ENCODE measurements at regions of chr17 and their contacts with region 1.

Region 1: DNA sequence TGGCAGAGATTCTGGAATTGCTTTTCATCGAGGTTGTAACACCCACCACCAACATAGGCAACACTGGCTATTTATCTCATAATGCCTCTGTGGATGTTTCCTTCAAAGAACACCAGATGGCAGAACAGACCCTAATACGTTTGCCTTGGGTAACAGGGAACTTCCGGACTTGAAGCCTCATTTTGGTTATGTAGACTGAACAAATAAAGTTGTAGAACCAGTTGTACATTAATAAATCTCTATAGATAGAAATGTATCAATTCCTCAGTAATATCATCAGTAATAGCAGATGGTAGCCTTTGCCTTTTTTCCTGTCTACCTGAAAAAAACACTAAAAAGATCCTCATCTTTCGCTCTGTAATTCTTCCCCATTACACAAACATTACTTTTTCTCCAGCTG is 25.9 kb upstream of the APOH start:
- DNase-seq: peak; percentile 74
- H3K4me3 ChIP-seq: no peak overlapping the region
- H3K27ac ChIP-seq: no peak overlapping the region
- H3K4me1 ChIP-seq: peaks cover 2% of the 10 kb centered on the region
- H3K27me3 ChIP-seq: no peaks in the 10 kb centered on the region
- CTCF ChIP-seq: peak; percentile 50 to 58
- POLR2A ChIP-seq: no peak

Region 2: DNA sequence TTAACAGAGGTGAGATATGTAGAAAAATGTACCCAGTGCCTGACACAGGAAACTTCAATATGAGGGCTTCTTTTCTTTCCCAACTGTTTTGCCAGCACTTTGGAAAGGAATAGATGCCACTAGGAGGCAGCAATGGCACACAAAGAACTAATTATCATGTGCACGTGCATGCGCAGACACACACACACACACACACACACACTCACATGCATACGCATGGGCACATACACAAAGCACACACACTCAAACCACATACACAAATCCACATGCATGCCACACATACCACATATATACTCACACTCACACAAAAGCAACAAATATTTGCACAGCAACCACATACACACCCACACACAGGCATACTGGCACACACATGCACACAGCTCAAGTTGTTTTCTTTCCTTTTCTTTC is 54.4 kb before region 1 on chr17:
- CTCF ChIA-PET with region 1: interaction called, 3 read pairs
- POLR2A ChIA-PET with region 1: no interaction called
- dilution Hi-C with region 1: no loop called
- intact Hi-C with region 1: loop called (anchors 1 kb)
- DNase-seq: peak; percentile 79
- H3K4me3 ChIP-seq: no peak overlapping the region
- H3K27ac ChIP-seq: no peak overlapping the region
- H3K4me1 ChIP-seq: no peaks in the 10 kb centered on the region
- H3K27me3 ChIP-seq: no peaks in the 10 kb centered on the region
- CTCF ChIP-seq: peak; percentile 67 to 70
- POLR2A ChIP-seq: no peak

Region 3: GRCh38 chr17:66275651-66276050 is 20.5 kb after region 1 on chr17:
- CTCF ChIA-PET with region 1: interaction called, 6 read pairs
- POLR2A ChIA-PET with region 1: no interaction called
- dilution Hi-C with region 1: no loop called
- intact Hi-C with region 1: loop called (anchors 1 kb)
- DNase-seq: peak; percentile 90
- H3K4me3 ChIP-seq: no peak overlapping the region
- H3K27ac ChIP-seq: peak overlapping the region; percentile 87
- H3K4me1 ChIP-seq: peaks cover 30% of the 10 kb centered on the region
- H3K27me3 ChIP-seq: no peaks in the 10 kb centered on the region
- CTCF ChIP-seq: no peak
- POLR2A ChIP-seq: no peak

Region 4: DNA sequence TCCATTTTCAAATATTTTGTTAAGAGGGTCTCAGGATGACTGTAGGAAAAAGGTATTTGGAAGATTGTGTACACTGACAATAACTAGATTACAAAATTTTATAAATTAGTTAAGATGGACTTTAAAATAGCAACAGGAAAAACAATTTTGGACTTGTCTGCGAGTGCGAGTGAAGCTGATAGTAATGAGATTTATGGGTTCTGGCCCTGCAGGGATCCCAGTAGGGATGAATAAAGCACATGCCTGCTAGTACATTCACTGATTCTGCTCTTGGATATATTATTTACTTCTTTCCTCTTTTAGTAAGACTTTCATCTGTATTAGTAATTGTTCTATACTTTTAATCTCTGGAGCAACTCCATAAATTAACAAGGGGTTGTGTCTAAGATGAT is 75.5 kb after region 1 on chr17:
- CTCF ChIA-PET with region 1: no interaction called
- POLR2A ChIA-PET with region 1: no interaction called
- dilution Hi-C with region 1: no loop called
- intact Hi-C with region 1: no loop called
- DNase-seq: no peak
- H3K4me3 ChIP-seq: no peak overlapping the region
- H3K27ac ChIP-seq: no peak overlapping the region
- H3K4me1 ChIP-seq: no peaks in the 10 kb centered on the region
- H3K27me3 ChIP-seq: no peaks in the 10 kb centered on the region
- CTCF ChIP-seq: no peak
- POLR2A ChIP-seq: no peak

Region 5: GRCh38 chr17:66426397-66427033 is 171.4 kb after region 1 on chr17:
- CTCF ChIA-PET with region 1: no interaction called
- POLR2A ChIA-PET with region 1: no interaction called
- dilution Hi-C with region 1: no loop called
- intact Hi-C with region 1: loop called (anchors 10 kb)
- DNase-seq: no peak
- H3K4me3 ChIP-seq: no peak overlapping the region
- H3K27ac ChIP-seq: no peak overlapping the region
- H3K4me1 ChIP-seq: peaks cover 6% of the 10 kb centered on the region
- H3K27me3 ChIP-seq: no peaks in the 10 kb centered on the region
- CTCF ChIP-seq: peak in 1 of 2 donors; percentile 21
- POLR2A ChIP-seq: no peak

Region 6: GRCh38 chr17:66625311-66625775 is 370.2 kb after region 1 on chr17:
- CTCF ChIA-PET with region 1: interaction called, 18 read pairs
- POLR2A ChIA-PET with region 1: no interaction called
- dilution Hi-C with region 1: no loop called
- intact Hi-C with region 1: loop called (anchors 1 kb)
- DNase-seq: peak; percentile 55
- H3K4me3 ChIP-seq: no peak overlapping the region
- H3K27ac ChIP-seq: no peak overlapping the region
- H3K4me1 ChIP-seq: no peaks in the 10 kb centered on the region
- H3K27me3 ChIP-seq: no peaks in the 10 kb centered on the region
- CTCF ChIP-seq: peak; percentile 23 to 39
- POLR2A ChIP-seq: no peak